ENCODE measurements at regions of chr2 and their contacts with region 1.

Region 1: GRCh38 chr2:106160786-106161261 is 33.3 kb downstream of the UXS1 start:
- DNase-seq: peak in 8 of 9 experiments; percentile 28 to 77 (median 55)
- ATAC-seq: peak; percentile 55
- H3K4me3 ChIP-seq: peak overlapping the region; percentile 68 to 69
- H3K4me3 Mint-ChIP-seq: peak overlapping the region; percentile 92
- H3K27ac ChIP-seq: peak overlapping the region; percentile 77 to 85
- H3K27ac Mint-ChIP-seq: peak overlapping the region; percentile 98
- H3K4me1 ChIP-seq: peaks cover 87% of the 10 kb centered on the region
- H3K4me1 Mint-ChIP-seq: peaks cover 92% of the 10 kb centered on the region
- H3K27me3 ChIP-seq: no peaks in the 10 kb centered on the region
- H3K27me3 Mint-ChIP-seq: no peaks in the 10 kb centered on the region
- CTCF ChIP-seq: no peak

Region 2: GRCh38 chr2:105789745-105790460 is 370.9 kb before region 1 on chr2:
- CTCF ChIA-PET with region 1: no interaction called
- POLR2A ChIA-PET with region 1: no interaction called
- intact Hi-C with region 1: loop called in 1 of 2 experiments (anchors 10 kb)
- DNase-seq: peak in 5 of 9 experiments; percentile 56 to 84 (median 70)
- ATAC-seq: peak; percentile 83
- H3K4me3 ChIP-seq: no peak overlapping the region
- H3K4me3 Mint-ChIP-seq: peak overlapping the region; percentile 62
- H3K27ac ChIP-seq: peak overlapping the region; percentile 8 to 86
- H3K27ac Mint-ChIP-seq: peak overlapping the region; percentile 94
- H3K4me1 ChIP-seq: peaks cover 91% of the 10 kb centered on the region
- H3K4me1 Mint-ChIP-seq: peaks cover 93% of the 10 kb centered on the region
- H3K27me3 ChIP-seq: no peaks in the 10 kb centered on the region
- H3K27me3 Mint-ChIP-seq: no peaks in the 10 kb centered on the region
- CTCF ChIP-seq: peak; percentile 39

Region 3: GRCh38 chr2:105977212-105977611 is 183.6 kb before region 1 on chr2:
- CTCF ChIA-PET with region 1: no interaction called
- POLR2A ChIA-PET with region 1: no interaction called
- intact Hi-C with region 1: no loop called
- DNase-seq: no peak
- ATAC-seq: no peak
- H3K4me3 ChIP-seq: no peak overlapping the region
- H3K4me3 Mint-ChIP-seq: no peak overlapping the region
- H3K27ac ChIP-seq: no peak overlapping the region
- H3K27ac Mint-ChIP-seq: peak overlapping the region; percentile 82
- H3K4me1 ChIP-seq: peaks cover 58% of the 10 kb centered on the region
- H3K4me1 Mint-ChIP-seq: peaks cover 52% of the 10 kb centered on the region
- H3K27me3 ChIP-seq: no peaks in the 10 kb centered on the region
- H3K27me3 Mint-ChIP-seq: no peaks in the 10 kb centered on the region
- CTCF ChIP-seq: no peak

Region 4: GRCh38 chr2:106147159-106147558 is 13.7 kb before region 1 on chr2:
- CTCF ChIA-PET with region 1: interaction called, 11 read pairs
- POLR2A ChIA-PET with region 1: interaction called, 8 read pairs
- intact Hi-C with region 1: loop called in 1 of 2 experiments (anchors 2 kb)
- DNase-seq: no peak
- ATAC-seq: no peak
- H3K4me3 ChIP-seq: no peak overlapping the region
- H3K4me3 Mint-ChIP-seq: no peak overlapping the region
- H3K27ac ChIP-seq: peak overlapping the region in 1 of 2 experiments; percentile 7
- H3K27ac Mint-ChIP-seq: peak overlapping the region; percentile 5
- H3K4me1 ChIP-seq: peaks cover 21% of the 10 kb centered on the region
- H3K4me1 Mint-ChIP-seq: peaks cover 76% of the 10 kb centered on the region
- H3K27me3 ChIP-seq: no peaks in the 10 kb centered on the region
- H3K27me3 Mint-ChIP-seq: no peaks in the 10 kb centered on the region
- CTCF ChIP-seq: no peak

Region 5: DNA sequence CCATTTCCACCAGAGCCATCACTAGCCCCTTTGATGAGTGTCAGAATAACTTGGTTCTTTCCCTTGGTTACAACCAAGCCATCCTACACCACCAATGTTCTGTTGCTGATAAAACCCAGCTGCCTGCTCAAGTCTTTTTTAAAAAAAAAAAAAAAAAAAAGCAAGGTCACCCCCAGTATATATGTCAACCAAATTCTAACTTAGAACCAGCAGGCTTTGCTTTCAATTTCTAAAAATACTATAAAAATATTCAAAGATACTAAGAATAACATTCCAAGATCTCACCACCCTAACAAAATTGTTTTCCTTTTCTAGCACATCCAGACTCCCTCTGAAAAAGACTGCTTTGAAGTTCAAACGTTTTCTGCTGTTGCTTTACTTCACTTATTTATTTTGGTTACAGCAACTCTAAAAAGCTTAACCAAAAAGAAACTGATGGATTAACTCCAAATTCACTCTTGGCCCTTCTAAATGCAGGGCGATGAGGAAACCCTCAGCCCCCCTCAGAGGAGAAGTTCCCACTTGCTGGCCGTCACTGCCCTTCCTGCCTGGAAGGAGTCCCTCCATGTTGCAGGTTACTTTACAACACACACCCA is 22.4 kb after region 1 on chr2:
- CTCF ChIA-PET with region 1: interaction called, 3 read pairs
- POLR2A ChIA-PET with region 1: interaction called, 10 read pairs
- intact Hi-C with region 1: no loop called
- DNase-seq: no peak
- ATAC-seq: no peak
- H3K4me3 ChIP-seq: no peak overlapping the region
- H3K4me3 Mint-ChIP-seq: peak overlapping the region; percentile 30
- H3K27ac ChIP-seq: no peak overlapping the region
- H3K27ac Mint-ChIP-seq: peak overlapping the region; percentile 69
- H3K4me1 ChIP-seq: peaks cover 54% of the 10 kb centered on the region
- H3K4me1 Mint-ChIP-seq: peaks cover 79% of the 10 kb centered on the region
- H3K27me3 ChIP-seq: no peaks in the 10 kb centered on the region
- H3K27me3 Mint-ChIP-seq: no peaks in the 10 kb centered on the region
- CTCF ChIP-seq: no peak

Region 6: GRCh38 chr2:106193977-106194778 is 33.4 kb after region 1 on chr2 and contains the start of gene UXS1:
- CTCF ChIA-PET with region 1: interaction called, 18 read pairs
- POLR2A ChIA-PET with region 1: interaction called, 35 read pairs
- intact Hi-C with region 1: loop called (anchors 1 to 2 kb)
- DNase-seq: peak; percentile 97 to 99 (median 98)
- ATAC-seq: peak; percentile 80
- H3K4me3 ChIP-seq: peak within 1 kb of the TSS; percentile 80 to 90
- H3K4me3 Mint-ChIP-seq: peak within 1 kb of the TSS; percentile 97
- H3K27ac ChIP-seq: peak within 1 kb of the TSS; percentile 70 to 77
- H3K27ac Mint-ChIP-seq: peak within 1 kb of the TSS; percentile 97
- H3K4me1 ChIP-seq: peaks cover 39% of the 10 kb centered on the region
- H3K4me1 Mint-ChIP-seq: peaks cover 46% of the 10 kb centered on the region
- H3K27me3 ChIP-seq: no peaks in the 10 kb centered on the region
- H3K27me3 Mint-ChIP-seq: no peaks in the 10 kb centered on the region
- CTCF ChIP-seq: no peak
- total RNA-seq, gene UXS1: 62.1 to 70.8 TPM